CD8-positive, alpha-beta T cell (primary cell): ENCODE measurements at regions of chr5 and their contacts with region 1.

Region 1: DNA sequence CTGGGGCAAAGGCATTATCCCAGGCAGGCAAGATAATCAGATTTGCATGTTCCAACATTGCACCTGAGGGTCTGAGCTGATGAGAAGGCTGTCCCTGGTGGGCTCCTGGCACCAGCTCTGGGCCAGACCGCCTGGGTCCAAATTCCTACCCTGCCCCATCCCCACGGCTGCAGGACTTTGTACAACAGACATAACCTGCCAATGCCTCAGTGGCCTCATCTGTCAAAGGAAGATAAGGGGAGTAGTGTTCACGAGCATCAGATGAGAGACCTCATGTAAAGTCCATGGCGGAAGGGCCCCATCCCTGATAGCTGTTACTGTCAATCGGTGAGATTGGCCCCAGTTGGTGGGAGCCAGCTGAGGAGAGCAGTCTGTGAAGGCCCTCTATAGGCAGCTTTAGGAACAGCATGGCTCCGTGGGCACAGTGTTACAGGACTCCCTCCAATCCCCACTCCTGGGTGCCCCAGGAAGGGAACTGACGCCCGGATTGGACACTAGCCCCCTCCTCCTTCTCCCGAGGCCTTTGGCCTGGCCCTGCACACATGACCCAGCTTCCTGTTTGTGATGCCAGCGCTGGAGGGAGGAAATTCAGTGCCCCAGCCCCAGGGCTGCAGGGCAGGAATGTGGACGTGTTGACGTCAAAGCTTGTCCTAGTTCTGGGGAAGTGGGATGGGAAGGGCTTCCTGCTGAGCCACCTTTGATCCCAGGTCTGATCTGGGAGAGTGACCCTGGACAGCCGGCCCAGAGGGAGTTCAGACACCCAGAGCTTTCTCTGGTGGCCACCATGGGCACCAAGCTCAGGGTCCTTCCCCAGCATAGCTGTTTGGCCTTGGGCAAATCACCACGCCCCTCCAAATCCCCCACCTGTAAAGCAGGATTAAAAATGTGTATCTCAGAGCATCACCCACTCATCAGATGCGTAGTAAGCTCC is 56.2 kb downstream of the DUSP1 start:
- DNase-seq: peak; percentile 43 to 82 (median 73)
- ATAC-seq: peak; percentile 79
- H3K4me3 ChIP-seq: no peak overlapping the region
- H3K4me3 Mint-ChIP-seq: no peak overlapping the region
- H3K27ac ChIP-seq: no peak overlapping the region
- H3K27ac Mint-ChIP-seq: no peak overlapping the region
- H3K4me1 ChIP-seq: peaks cover 13% of the 10 kb centered on the region
- H3K4me1 Mint-ChIP-seq: peaks cover 13% of the 10 kb centered on the region
- H3K27me3 ChIP-seq: peaks cover 0 to 6% of the 10 kb centered on the region in 2 experiments
- H3K27me3 Mint-ChIP-seq: peaks cover 10% of the 10 kb centered on the region
- CTCF ChIP-seq: peak; percentile 82

Region 2: GRCh38 chr5:172524573-172525021 is 190.2 kb before region 1 on chr5:
- CTCF ChIA-PET with region 1: no interaction called
- POLR2A ChIA-PET with region 1: no interaction called
- intact Hi-C with region 1: no loop called
- DNase-seq: peak in 1 of 9 experiments; percentile 31
- ATAC-seq: no peak
- H3K4me3 ChIP-seq: no peak overlapping the region
- H3K4me3 Mint-ChIP-seq: no peak overlapping the region
- H3K27ac ChIP-seq: no peak overlapping the region
- H3K27ac Mint-ChIP-seq: no peak overlapping the region
- H3K4me1 ChIP-seq: no peaks in the 10 kb centered on the region
- H3K4me1 Mint-ChIP-seq: no peaks in the 10 kb centered on the region
- H3K27me3 ChIP-seq: no peaks in the 10 kb centered on the region
- H3K27me3 Mint-ChIP-seq: peaks cover 24% of the 10 kb centered on the region
- CTCF ChIP-seq: no peak

Region 3: GRCh38 chr5:172754596-172755356 is 40.0 kb after region 1 on chr5:
- CTCF ChIA-PET with region 1: interaction called, 16 read pairs
- POLR2A ChIA-PET with region 1: no interaction called
- intact Hi-C with region 1: no loop called
- DNase-seq: no peak
- ATAC-seq: no peak
- H3K4me3 ChIP-seq: no peak overlapping the region
- H3K4me3 Mint-ChIP-seq: no peak overlapping the region
- H3K27ac ChIP-seq: no peak overlapping the region
- H3K27ac Mint-ChIP-seq: no peak overlapping the region
- H3K4me1 ChIP-seq: no peaks in the 10 kb centered on the region
- H3K4me1 Mint-ChIP-seq: peaks cover 2% of the 10 kb centered on the region
- H3K27me3 ChIP-seq: no peaks in the 10 kb centered on the region
- H3K27me3 Mint-ChIP-seq: no peaks in the 10 kb centered on the region
- CTCF ChIP-seq: no peak

Region 4: GRCh38 chr5:172777881-172778814 is 63.4 kb after region 1 on chr5:
- CTCF ChIA-PET with region 1: interaction called, 70 read pairs
- POLR2A ChIA-PET with region 1: no interaction called
- intact Hi-C with region 1: no loop called
- DNase-seq: peak in 1 of 9 experiments; percentile 47
- ATAC-seq: peak; percentile 52
- H3K4me3 ChIP-seq: peak overlapping the region; percentile 18 to 22
- H3K4me3 Mint-ChIP-seq: peak overlapping the region; percentile 59
- H3K27ac ChIP-seq: peak overlapping the region; percentile 82 to 95
- H3K27ac Mint-ChIP-seq: peak overlapping the region; percentile 94
- H3K4me1 ChIP-seq: peaks cover 23% of the 10 kb centered on the region
- H3K4me1 Mint-ChIP-seq: peaks cover 38% of the 10 kb centered on the region
- H3K27me3 ChIP-seq: no peaks in the 10 kb centered on the region
- H3K27me3 Mint-ChIP-seq: no peaks in the 10 kb centered on the region
- CTCF ChIP-seq: no peak

Region 5: DNA sequence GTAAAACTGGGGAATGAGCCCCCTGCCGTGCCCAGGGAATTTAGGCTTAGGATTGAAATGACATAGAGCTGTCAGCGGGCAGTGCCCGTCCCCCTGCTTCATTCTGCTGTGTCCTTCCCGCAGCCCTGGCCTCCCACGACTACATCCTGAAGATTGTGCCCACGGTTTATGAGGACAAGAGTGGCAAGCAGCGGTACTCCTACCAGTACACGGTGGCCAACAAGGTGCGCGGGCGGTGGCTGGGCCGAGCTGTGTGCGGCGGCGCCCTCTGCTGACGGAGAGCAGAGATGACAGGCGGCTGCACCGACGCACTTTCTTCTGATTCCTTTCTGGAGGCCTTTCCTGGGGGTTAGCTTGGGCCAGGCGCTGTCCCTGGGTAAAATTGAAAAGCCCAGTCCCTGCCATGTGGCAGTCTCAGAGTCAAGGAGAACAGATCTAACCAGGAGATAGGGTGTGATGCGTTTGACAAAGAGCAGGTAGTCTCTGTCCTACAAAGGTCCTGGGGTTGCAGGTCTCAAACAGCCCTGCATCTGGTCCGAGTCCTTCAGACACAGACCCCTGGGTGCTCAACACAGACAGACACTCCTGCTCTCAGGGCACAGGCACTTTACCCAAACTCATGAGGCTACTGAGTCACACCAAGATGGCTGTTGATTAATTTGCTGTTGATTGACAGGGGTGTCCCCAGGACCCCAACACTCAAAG is 217.7 kb after region 1 on chr5:
- CTCF ChIA-PET with region 1: interaction called, 436 read pairs
- POLR2A ChIA-PET with region 1: interaction called, 6 read pairs
- intact Hi-C with region 1: loop called (anchors 1 kb)
- DNase-seq: peak; percentile 59 to 86 (median 75)
- ATAC-seq: peak; percentile 100
- H3K4me3 ChIP-seq: no peak overlapping the region
- H3K4me3 Mint-ChIP-seq: no peak overlapping the region
- H3K27ac ChIP-seq: no peak overlapping the region
- H3K27ac Mint-ChIP-seq: peak overlapping the region; percentile 67
- H3K4me1 ChIP-seq: no peaks in the 10 kb centered on the region
- H3K4me1 Mint-ChIP-seq: peaks cover 7% of the 10 kb centered on the region
- H3K27me3 ChIP-seq: no peaks in the 10 kb centered on the region
- H3K27me3 Mint-ChIP-seq: no peaks in the 10 kb centered on the region
- CTCF ChIP-seq: peak; percentile 97

Region 6: DNA sequence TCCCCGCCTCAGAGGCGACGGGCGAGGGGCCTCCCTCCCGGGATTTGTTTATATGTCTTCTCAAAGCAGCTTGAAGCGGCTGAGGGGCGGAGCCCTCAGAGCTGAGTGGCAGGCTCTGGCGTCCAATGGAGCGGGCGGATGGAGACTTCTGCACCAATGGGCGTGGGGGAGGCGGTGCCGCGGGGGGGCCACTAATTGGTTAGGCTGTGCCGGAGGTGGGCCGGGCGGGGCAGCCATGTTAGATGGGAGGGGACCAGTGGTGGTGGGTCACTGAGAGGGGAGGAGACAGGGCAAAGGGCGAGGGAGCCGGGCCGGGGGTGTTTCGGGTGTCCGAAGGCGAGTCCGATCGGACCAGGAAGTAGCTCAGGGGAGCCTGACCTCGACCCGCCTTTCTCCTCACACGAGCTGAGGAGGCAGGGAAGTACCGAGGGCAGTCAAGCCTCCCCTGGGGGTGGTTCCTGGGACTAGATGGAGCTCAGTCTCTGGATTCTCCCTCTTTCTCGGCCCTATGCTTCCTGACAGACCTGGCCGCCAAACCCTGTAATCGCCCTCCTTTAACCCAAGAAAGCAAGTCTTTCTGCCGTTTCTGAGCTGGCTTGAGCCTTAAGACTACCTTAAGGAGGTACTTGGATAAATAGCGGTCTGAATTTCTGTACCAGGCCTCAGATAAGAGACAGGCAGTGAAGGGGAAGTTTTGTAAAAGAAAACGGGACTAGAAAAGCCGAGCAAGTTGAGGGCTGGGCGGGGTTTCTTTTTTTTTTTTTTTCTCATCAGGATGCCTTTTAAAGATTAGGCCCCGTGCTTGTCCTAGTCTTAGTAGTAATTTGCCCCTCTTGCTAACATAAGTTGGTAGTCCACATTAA is 342.5 kb after region 1 on chr5:
- CTCF ChIA-PET with region 1: no interaction called
- POLR2A ChIA-PET with region 1: interaction called, 3 read pairs
- intact Hi-C with region 1: loop called in 1 of 2 experiments (anchors 5 kb)
- DNase-seq: peak; percentile 98 to 99 (median 98)
- ATAC-seq: peak; percentile 81
- H3K4me3 ChIP-seq: peak overlapping the region; percentile 92 to 99
- H3K4me3 Mint-ChIP-seq: peak overlapping the region; percentile 94
- H3K27ac ChIP-seq: peak overlapping the region; percentile 80 to 81
- H3K27ac Mint-ChIP-seq: peak overlapping the region; percentile 94
- H3K4me1 ChIP-seq: peaks cover 36% of the 10 kb centered on the region
- H3K4me1 Mint-ChIP-seq: peaks cover 44% of the 10 kb centered on the region
- H3K27me3 ChIP-seq: no peaks in the 10 kb centered on the region
- H3K27me3 Mint-ChIP-seq: no peaks in the 10 kb centered on the region
- CTCF ChIP-seq: no peak

Region 7: GRCh38 chr5:173283318-173284288 is 568.8 kb after region 1 on chr5:
- CTCF ChIA-PET with region 1: no interaction called
- POLR2A ChIA-PET with region 1: no interaction called
- intact Hi-C with region 1: loop called in 1 of 2 experiments (anchors 5 kb)
- DNase-seq: peak; percentile 30 to 77 (median 68)
- ATAC-seq: peak; percentile 98
- H3K4me3 ChIP-seq: peak overlapping the region in 1 of 2 experiments; percentile 20
- H3K4me3 Mint-ChIP-seq: peak overlapping the region; percentile 26
- H3K27ac ChIP-seq: no peak overlapping the region
- H3K27ac Mint-ChIP-seq: no peak overlapping the region
- H3K4me1 ChIP-seq: peaks cover 6% of the 10 kb centered on the region
- H3K4me1 Mint-ChIP-seq: peaks cover 8% of the 10 kb centered on the region
- H3K27me3 ChIP-seq: peaks cover 0 to 12% of the 10 kb centered on the region in 2 experiments
- H3K27me3 Mint-ChIP-seq: peaks cover 78% of the 10 kb centered on the region
- CTCF ChIP-seq: peak; percentile 53